WTC11 (cell line): ENCODE measurements at regions of chr13 and their contacts with region 1.

Region 1: DNA sequence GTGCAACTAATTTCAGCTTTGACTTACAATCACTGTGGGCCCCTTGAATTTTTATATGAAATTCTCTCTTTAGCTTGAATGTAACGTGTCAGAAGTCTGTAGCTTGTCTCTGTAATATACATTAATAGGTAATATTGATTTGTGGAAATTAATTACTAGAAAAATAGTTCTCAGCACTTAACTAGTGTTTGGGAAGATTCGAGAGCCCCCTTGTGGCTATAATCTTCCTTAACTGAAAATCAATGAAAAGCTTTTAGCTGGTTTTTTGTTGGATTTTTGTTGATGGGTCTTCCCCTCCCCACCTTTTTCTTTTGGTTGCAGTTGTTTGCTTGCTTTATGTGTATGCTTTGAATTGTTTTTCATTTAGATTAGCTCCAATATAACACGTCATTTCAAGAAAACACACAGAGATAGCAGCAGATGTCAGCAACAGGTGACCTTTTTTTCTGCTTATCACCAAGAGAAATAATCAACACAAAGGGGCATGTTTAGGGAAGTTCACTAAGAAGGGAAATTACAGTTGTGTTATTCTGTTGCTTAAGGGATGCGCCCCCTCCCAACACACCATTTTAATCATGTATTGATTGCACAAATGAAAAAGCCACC is 176.8 kb downstream of the OXGR1 start:
- DNase-seq: no peak
- ATAC-seq: peak; percentile 28
- H3K4me3 Mint-ChIP-seq: no peak overlapping the region
- H3K27ac Mint-ChIP-seq: no peak overlapping the region
- H3K4me1 Mint-ChIP-seq: peaks cover 28% of the 10 kb centered on the region
- H3K27me3 Mint-ChIP-seq: peaks cover 6% of the 10 kb centered on the region
- CTCF ChIP-seq: peak; percentile 46; the same call in 1 of the 2 replicates

Region 2: DNA sequence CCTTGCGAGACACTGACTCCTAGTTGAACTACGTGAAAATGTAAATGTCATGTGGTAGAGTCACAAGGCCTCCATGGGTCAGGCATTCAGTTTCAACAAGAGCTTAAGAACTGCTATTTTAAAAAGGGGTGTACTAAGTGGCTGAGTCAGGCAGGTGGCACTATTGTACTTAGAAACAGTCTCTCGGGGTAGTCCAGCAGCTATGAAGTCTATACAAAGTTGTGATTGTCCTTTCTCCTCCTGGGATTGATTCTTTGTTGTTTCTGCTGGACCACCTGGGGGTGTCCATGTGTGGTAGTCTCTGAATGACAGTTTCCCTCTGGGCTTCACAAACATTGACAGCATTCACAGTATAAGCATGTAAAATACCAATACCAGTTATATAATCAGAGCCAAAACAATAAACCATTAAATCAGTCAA is 797.3 kb before region 1 on chr13:
- CTCF ChIA-PET with region 1: interaction called, 14 read pairs
- POLR2A ChIA-PET with region 1: no interaction called
- DNase-seq: no peak
- ATAC-seq: peak; percentile 93
- H3K4me3 Mint-ChIP-seq: no peak overlapping the region
- H3K27ac Mint-ChIP-seq: peak overlapping the region; percentile 80; the same call in 1 of the 2 replicates
- H3K4me1 Mint-ChIP-seq: peaks cover 12% of the 10 kb centered on the region
- H3K27me3 Mint-ChIP-seq: no peaks in the 10 kb centered on the region
- CTCF ChIP-seq: peak; percentile 37; the same call in 1 of the 2 replicates

Region 3: GRCh38 chr13:96141027-96141426 is 676.4 kb before region 1 on chr13:
- CTCF ChIA-PET with region 1: interaction called, 17 read pairs
- POLR2A ChIA-PET with region 1: no interaction called
- DNase-seq: no peak
- ATAC-seq: 0 out of 2 replicates have a peak, but pooled peaks have one; percentile 20
- H3K4me3 Mint-ChIP-seq: no peak overlapping the region
- H3K27ac Mint-ChIP-seq: no peak overlapping the region
- H3K4me1 Mint-ChIP-seq: no peaks in the 10 kb centered on the region
- H3K27me3 Mint-ChIP-seq: no peaks in the 10 kb centered on the region
- CTCF ChIP-seq: no peak

Region 4: GRCh38 chr13:96958286-96958891 is 140.9 kb after region 1 on chr13:
- CTCF ChIA-PET with region 1: interaction called, 10 read pairs
- POLR2A ChIA-PET with region 1: no interaction called
- DNase-seq: no peak
- ATAC-seq: peak; percentile 36; the same call in 1 of the 2 replicates
- H3K4me3 Mint-ChIP-seq: no peak overlapping the region
- H3K27ac Mint-ChIP-seq: no peak overlapping the region
- H3K4me1 Mint-ChIP-seq: no peaks in the 10 kb centered on the region
- H3K27me3 Mint-ChIP-seq: no peaks in the 10 kb centered on the region
- CTCF ChIP-seq: peak; percentile 64

Region 5: GRCh38 chr13:96967248-96967745 is 149.9 kb after region 1 on chr13:
- CTCF ChIA-PET with region 1: interaction called, 12 read pairs
- POLR2A ChIA-PET with region 1: no interaction called
- DNase-seq: no peak
- ATAC-seq: peak; percentile 58
- H3K4me3 Mint-ChIP-seq: no peak overlapping the region
- H3K27ac Mint-ChIP-seq: no peak overlapping the region
- H3K4me1 Mint-ChIP-seq: peaks cover 4% of the 10 kb centered on the region; the same call in 1 of the 2 replicates
- H3K27me3 Mint-ChIP-seq: peaks cover 6% of the 10 kb centered on the region
- CTCF ChIP-seq: 0 out of 2 replicates have a peak, but pooled peaks have one; percentile 24

Region 6: GRCh38 chr13:97058391-97058790 is 241.0 kb after region 1 on chr13:
- CTCF ChIA-PET with region 1: no interaction called
- POLR2A ChIA-PET with region 1: no interaction called
- DNase-seq: no peak
- ATAC-seq: no peak
- H3K4me3 Mint-ChIP-seq: no peak overlapping the region
- H3K27ac Mint-ChIP-seq: no peak overlapping the region
- H3K4me1 Mint-ChIP-seq: no peaks in the 10 kb centered on the region
- H3K27me3 Mint-ChIP-seq: peaks cover 2% of the 10 kb centered on the region; the same call in 1 of the 2 replicates
- CTCF ChIP-seq: no peak